ENCODE measurements at regions of chr5 and their contacts with region 1.

Region 1: GRCh38 chr5:109688971-109689739 is 572 bp upstream of the MAN2A1 start:
- DNase-seq: peak; percentile 66 to 92
- ATAC-seq: peak; percentile 79 to 87
- H3K4me3 ChIP-seq: peak overlapping the region; percentile 94
- H3K27ac ChIP-seq: peak overlapping the region; percentile 96 to 98
- H3K4me1 ChIP-seq: peaks cover 19% of the 10 kb centered on the region
- CTCF ChIP-seq: no peak; the same call in 2 of the 3 replicates
- EP300 ChIP-seq: no peak
- POLR2A ChIP-seq: peak; percentile 65
- RAD21 ChIP-seq: 0 out of 5 replicates have a peak, but pooled peaks of 1 of the 2 experiments have one; percentile 1

Region 2: GRCh38 chr5:108642167-108642906 is 1046.8 kb before region 1 on chr5:
- CTCF ChIA-PET with region 1: interaction called, 11 read pairs
- POLR2A ChIA-PET with region 1: no interaction called
- DNase-seq: peak; percentile 65 to 76
- ATAC-seq: peak; percentile 95 to 99
- H3K4me3 ChIP-seq: no peak overlapping the region
- H3K27ac ChIP-seq: no peak overlapping the region
- H3K4me1 ChIP-seq: no peaks in the 10 kb centered on the region
- CTCF ChIP-seq: peak; percentile 90
- EP300 ChIP-seq: no peak
- POLR2A ChIP-seq: no peak
- RAD21 ChIP-seq: peak; percentile 88 to 91

Region 3: DNA sequence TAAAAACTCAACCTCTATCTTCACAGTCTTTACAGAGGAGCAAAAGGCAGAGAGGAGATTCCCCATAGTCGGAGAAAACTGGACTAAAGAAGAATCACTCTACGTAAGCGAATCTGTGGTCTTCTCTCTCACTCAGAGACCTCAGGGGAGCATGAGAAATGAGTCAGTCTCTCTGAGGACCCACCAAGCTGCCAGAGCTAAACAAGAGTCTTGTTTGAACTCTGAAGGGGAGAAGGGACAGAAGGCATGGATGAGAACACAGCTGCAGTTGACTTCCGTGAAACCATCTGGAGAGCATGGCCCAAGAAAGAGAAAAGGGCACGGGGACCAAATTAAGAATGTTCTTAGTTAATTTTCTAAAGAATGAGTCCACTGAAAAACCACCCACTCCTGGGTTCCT is 12.2 kb before region 1 on chr5:
- CTCF ChIA-PET with region 1: interaction called, 32 read pairs
- POLR2A ChIA-PET with region 1: interaction called, 5 read pairs
- DNase-seq: no peak
- ATAC-seq: no peak
- H3K4me3 ChIP-seq: no peak overlapping the region
- H3K27ac ChIP-seq: no peak overlapping the region
- H3K4me1 ChIP-seq: no peaks in the 10 kb centered on the region
- CTCF ChIP-seq: no peak
- EP300 ChIP-seq: no peak
- POLR2A ChIP-seq: no peak
- RAD21 ChIP-seq: no peak

Region 4: DNA sequence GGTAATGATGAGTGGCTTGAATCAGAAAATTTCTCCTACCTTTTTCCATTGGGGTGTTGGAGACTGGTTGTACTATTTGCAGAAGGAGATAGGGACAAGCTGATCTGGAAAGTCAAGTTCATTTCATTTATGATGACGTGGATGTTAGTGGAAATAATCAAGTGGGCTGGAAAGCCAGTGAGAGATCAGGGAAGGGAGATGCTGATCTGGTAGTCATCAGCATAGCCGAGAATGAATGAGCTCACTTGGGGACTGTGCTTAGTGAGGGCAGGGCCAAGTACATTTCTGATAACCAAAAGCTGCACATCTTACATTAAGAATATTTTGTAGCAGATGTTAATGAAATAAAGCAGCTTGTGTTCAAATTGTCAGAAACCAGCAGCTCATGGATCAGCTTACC is 12.6 kb after region 1 on chr5:
- CTCF ChIA-PET with region 1: interaction called, 14 read pairs
- POLR2A ChIA-PET with region 1: no interaction called
- DNase-seq: no peak
- ATAC-seq: no peak
- H3K4me3 ChIP-seq: no peak overlapping the region
- H3K27ac ChIP-seq: no peak overlapping the region
- H3K4me1 ChIP-seq: no peaks in the 10 kb centered on the region
- CTCF ChIP-seq: no peak
- EP300 ChIP-seq: no peak
- POLR2A ChIP-seq: no peak
- RAD21 ChIP-seq: no peak

Region 5: DNA sequence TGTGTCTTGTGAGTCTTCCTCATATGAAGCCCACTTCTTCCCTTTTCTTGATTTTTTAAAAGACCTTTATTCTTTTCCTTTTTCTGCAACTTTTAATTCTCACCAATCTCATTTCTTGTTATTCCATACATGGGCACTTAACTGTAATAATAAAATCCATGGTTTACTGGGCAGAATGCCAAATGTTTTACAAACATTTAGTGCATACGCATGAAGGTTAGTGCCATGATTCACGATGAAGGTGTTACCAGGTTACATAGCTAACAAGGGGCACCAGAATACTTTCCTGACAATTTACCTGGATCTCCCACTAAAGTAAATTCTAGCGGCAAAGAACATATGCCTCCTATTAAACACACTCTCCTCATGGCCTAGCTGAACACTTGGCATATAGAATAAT is 29.1 kb after region 1 on chr5:
- CTCF ChIA-PET with region 1: no interaction called
- POLR2A ChIA-PET with region 1: no interaction called
- DNase-seq: no peak
- ATAC-seq: no peak
- H3K4me3 ChIP-seq: no peak overlapping the region
- H3K27ac ChIP-seq: no peak overlapping the region
- H3K4me1 ChIP-seq: no peaks in the 10 kb centered on the region
- CTCF ChIP-seq: no peak
- EP300 ChIP-seq: no peak
- POLR2A ChIP-seq: no peak
- RAD21 ChIP-seq: no peak